Heart right ventricle (tissue), 16 donors: ENCODE measurements at regions of chr4 and their contacts with region 1.

Region 1: DNA sequence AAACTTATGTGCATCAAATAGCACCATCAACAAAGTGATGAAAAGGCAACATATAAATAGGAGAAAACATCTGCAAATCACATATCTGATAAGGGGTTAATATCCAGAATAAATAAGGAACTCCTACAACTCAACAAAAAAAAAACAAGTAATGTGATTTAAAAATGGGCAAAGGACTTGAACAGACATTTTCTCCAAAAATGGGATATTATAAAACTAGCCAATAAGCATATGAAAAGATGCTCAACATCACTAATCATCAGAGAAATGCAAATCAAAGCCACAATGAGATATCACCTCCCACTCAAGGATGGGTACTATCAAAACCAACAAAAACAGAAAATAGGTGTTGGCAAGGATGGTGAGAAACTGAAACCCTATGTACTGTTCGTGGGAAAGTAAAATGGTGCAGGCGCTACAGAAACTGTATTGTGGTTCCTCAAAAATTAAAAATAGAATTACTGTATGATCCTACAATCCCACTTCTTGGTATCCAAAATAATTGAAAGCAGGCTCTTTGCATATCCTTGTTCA is 2.4 kb downstream of the DNAJB14 start:
- DNase-seq: no peak
- ATAC-seq: no peak
- H3K4me3 ChIP-seq: no peak overlapping the region
- H3K27ac ChIP-seq: no peak overlapping the region
- H3K4me1 ChIP-seq: peaks cover 0 to 60% (median 35%) of the 10 kb centered on the region in 9 donors
- H3K27me3 ChIP-seq: no peaks in the 10 kb centered on the region
- CTCF ChIP-seq: no peak

Region 2: GRCh38 chr4:99894161-99894997 is 49.6 kb before region 1 on chr4 and contains the start of gene LAMTOR3:
- intact Hi-C with region 1: loop called in 8 of 10 experiments (anchors 2 to 5 kb)
- DNase-seq: peak; percentile 89 to 92
- ATAC-seq: peak; percentile 98 to 100 (median 99)
- H3K4me3 ChIP-seq: peak within 1 kb of the TSS; percentile 65 to 94 (median 86)
- H3K27ac ChIP-seq: peak within 1 kb of the TSS; percentile 50 to 93 (median 82)
- H3K4me1 ChIP-seq: peaks cover 5 to 49% (median 34%) of the 10 kb centered on the region in 9 donors
- H3K27me3 ChIP-seq: no peaks in the 10 kb centered on the region
- CTCF ChIP-seq: no peak
- total RNA-seq, gene LAMTOR3: 31.2 to 37.4 (median 35.5) TPM